Panc1 (cell line): ENCODE measurements at regions of chr12 and their contacts with region 1.

Region 1: GRCh38 chr12:78756936-78757335 is 107.6 kb upstream of the SYT1 start:
- DNase-seq: no peak
- ATAC-seq: no peak
- H3K4me3 ChIP-seq: no peak overlapping the region
- H3K27ac ChIP-seq: no peak overlapping the region
- H3K4me1 ChIP-seq: no peaks in the 10 kb centered on the region
- H3K27me3 ChIP-seq: no peaks in the 10 kb centered on the region
- CTCF ChIP-seq: no peak

Region 2: DNA sequence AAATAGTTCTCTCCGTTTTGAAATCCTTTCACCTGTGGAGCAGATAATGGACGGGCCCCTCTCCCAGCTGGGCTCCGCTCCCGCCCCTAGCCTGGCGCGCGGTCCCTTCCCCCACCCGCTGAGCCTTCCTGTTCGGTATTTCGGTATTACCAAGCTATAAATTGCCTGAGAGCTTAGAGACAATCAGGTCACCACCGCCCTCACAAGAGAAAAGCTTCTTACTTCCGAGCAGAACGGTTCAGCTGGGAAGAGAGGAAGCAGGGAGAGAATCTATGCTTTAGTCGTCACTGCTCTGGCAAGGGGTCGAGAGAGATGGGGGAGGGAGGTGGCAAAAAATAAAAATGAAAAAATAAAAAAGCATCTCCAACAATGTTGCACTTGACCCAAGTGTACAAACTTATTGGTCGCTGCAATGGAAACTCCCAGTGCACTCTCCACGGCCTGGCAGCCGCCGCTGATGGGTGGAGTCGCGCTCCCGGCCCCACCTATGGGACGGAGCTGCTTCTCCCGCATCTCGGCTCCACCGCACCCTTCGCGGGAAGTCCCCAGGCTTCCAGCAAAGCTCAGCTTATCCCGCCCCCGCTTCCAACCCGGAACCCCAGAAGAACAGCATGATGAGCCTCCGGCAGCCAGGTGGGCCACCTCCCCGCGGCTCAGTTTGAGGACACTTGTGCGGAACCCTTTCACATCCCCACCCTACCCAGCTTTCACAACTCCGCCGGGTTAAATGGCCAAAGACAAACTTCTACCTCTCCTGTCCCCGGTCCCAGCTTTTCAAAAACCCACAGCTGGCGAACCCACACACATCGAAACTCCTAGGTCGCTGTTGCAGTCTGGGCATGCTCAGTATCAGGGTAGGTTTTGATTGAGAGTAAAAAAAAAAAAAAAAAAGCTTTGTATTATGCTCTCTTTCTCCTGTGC is 106.8 kb after region 1 on chr12:
- CTCF ChIA-PET with region 1: interaction called, 11 read pairs
- POLR2A ChIA-PET with region 1: no interaction called
- in situ Hi-C with region 1: no loop called
- intact Hi-C with region 1: no loop called
- DNase-seq: no peak
- ATAC-seq: peak; percentile 92
- H3K4me3 ChIP-seq: peak overlapping the region; percentile 78 to 92
- H3K27ac ChIP-seq: peak overlapping the region; percentile 39; the same call in 1 of the 2 replicates
- H3K4me1 ChIP-seq: peaks cover 5% of the 10 kb centered on the region
- H3K27me3 ChIP-seq: peaks cover 5% of the 10 kb centered on the region; the same call in 1 of the 2 replicates
- CTCF ChIP-seq: no peak